ENCODE measurements at regions of chr2 and their contacts with region 1.

Region 1: DNA sequence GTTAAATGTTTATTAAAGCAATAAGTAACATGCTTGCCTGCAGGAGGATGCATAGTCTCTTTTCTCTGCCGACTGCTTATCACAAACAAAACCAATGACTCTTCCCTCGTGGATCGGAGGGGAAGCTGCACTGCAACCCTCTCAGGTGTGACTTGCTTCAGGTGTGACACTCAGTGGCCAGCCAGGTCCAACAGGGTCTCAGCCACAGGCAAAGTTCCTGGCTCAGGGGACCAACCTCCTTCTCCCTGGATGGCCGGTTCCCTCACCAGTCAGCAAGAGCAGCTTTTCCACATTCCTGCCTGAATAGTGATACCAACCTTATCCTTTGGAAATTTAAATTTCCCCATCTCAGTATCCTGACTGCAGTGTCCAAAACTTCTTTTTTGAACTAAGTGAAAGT is 383.5 kb downstream of the CMPK2 start:
- DNase-seq: no peak
- H3K4me3 Mint-ChIP-seq: no peak overlapping the region
- H3K27ac Mint-ChIP-seq: no peak overlapping the region
- H3K4me1 Mint-ChIP-seq: no peaks in the 10 kb centered on the region
- H3K27me3 Mint-ChIP-seq: no peaks in the 10 kb centered on the region

Region 2: DNA sequence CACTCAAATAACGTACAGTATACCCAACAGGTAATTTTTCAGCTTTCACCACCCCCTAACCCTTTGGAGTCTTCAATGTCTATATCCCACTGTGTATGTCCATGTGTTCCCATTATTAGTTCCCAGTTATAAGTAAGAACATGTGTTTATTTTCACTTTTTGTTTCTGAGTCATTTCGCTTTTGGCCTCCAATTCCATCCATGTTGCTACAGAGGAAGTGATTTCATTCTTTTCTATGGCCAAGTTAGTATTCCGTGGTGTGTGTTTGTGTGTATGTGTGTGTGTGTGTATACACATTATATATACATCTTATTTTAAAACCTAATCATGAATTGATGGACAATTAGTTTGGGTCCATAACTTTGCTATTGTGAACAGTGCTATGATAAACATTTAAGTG is 81.0 kb before region 1 on chr2:
- CTCF ChIA-PET with region 1: no interaction called
- POLR2A ChIA-PET with region 1: no interaction called
- intact Hi-C with region 1: no loop called
- DNase-seq: no peak
- H3K4me3 Mint-ChIP-seq: no peak overlapping the region
- H3K27ac Mint-ChIP-seq: no peak overlapping the region
- H3K4me1 Mint-ChIP-seq: no peaks in the 10 kb centered on the region
- H3K27me3 Mint-ChIP-seq: no peaks in the 10 kb centered on the region

Region 3: DNA sequence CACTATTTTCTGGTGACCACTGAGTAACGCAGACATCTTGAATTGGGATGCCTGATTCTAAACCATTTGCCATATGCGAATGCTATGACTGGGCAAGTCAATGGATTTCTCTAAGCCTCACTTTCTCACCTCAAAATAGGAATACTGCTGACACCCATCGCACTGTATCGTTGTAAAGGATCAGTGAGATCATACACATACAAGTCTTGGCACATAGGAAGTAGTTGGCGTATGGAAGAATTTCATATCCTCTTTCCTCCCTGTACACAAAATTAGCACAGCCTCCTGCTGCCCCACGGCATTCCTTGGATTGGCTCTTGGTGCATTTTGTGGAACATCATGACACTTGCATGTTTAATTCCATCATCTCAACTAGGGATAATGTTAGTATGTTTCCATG is 16.6 kb after region 1 on chr2:
- CTCF ChIA-PET with region 1: no interaction called
- POLR2A ChIA-PET with region 1: no interaction called
- intact Hi-C with region 1: loop called (anchors 1 kb)
- DNase-seq: no peak
- H3K4me3 Mint-ChIP-seq: no peak overlapping the region
- H3K27ac Mint-ChIP-seq: no peak overlapping the region
- H3K4me1 Mint-ChIP-seq: no peaks in the 10 kb centered on the region
- H3K27me3 Mint-ChIP-seq: no peaks in the 10 kb centered on the region

Region 4: GRCh38 chr2:6835467-6835866 is 353.2 kb after region 1 on chr2:
- CTCF ChIA-PET with region 1: no interaction called
- POLR2A ChIA-PET with region 1: no interaction called
- intact Hi-C with region 1: no loop called
- DNase-seq: no peak
- H3K4me3 Mint-ChIP-seq: no peak overlapping the region
- H3K27ac Mint-ChIP-seq: no peak overlapping the region
- H3K4me1 Mint-ChIP-seq: peaks cover 14% of the 10 kb centered on the region
- H3K27me3 Mint-ChIP-seq: no peaks in the 10 kb centered on the region

Measured in activated CD4-positive, alpha-beta memory T cell treated with anti-CD3 and anti-CD28 coated beads for 36 hours (primary cell).